PC-9 (cell line): ENCODE measurements at regions of chr15 and their contacts with region 1.

Region 1: DNA sequence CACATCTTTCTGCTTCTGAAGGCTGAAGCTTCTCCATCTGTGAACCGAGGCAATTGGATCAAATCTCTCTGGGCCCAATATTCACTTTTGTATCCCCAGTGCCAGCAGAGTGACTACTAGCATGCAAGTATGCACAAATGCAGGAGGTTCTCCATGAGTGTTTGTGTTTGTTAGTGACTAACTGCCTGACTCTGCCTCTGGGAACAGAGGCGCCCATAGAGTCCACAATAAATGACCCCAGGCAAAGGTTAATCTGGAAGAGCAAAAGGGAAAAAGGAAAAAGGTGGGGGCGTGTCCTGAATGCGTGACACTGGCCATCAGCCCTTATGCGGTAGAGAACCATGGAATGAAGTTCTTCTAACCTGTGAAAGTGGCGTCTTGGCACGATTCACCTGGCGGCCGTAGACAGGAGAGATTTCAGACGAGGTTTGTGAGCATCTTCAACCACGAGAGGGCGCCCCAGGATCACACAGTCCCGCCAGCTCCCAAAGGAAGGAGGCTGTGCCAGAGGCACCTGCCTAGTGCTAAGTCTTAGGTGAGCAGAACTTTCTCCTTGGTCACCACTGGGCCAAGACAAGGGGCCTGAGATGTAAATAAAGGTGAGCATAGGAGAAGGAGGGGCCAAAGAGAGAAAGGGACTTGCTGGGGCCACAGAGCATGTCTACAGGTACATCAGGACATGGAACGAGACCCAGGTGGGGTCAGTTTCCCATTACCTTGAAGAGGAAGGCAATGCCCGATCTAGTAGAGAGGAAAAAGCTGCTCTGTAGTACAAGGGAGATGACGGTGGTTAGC is 44.2 kb downstream of the RBPMS2 start:
- DNase-seq: peak; percentile 65 to 88
- H3K4me3 ChIP-seq: no peak overlapping the region
- H3K27ac ChIP-seq: no peak overlapping the region
- H3K4me1 ChIP-seq: no peaks in the 10 kb centered on the region
- H3K27me3 ChIP-seq: no peaks in the 10 kb centered on the region
- CTCF ChIP-seq: peak; percentile 84

Region 2: DNA sequence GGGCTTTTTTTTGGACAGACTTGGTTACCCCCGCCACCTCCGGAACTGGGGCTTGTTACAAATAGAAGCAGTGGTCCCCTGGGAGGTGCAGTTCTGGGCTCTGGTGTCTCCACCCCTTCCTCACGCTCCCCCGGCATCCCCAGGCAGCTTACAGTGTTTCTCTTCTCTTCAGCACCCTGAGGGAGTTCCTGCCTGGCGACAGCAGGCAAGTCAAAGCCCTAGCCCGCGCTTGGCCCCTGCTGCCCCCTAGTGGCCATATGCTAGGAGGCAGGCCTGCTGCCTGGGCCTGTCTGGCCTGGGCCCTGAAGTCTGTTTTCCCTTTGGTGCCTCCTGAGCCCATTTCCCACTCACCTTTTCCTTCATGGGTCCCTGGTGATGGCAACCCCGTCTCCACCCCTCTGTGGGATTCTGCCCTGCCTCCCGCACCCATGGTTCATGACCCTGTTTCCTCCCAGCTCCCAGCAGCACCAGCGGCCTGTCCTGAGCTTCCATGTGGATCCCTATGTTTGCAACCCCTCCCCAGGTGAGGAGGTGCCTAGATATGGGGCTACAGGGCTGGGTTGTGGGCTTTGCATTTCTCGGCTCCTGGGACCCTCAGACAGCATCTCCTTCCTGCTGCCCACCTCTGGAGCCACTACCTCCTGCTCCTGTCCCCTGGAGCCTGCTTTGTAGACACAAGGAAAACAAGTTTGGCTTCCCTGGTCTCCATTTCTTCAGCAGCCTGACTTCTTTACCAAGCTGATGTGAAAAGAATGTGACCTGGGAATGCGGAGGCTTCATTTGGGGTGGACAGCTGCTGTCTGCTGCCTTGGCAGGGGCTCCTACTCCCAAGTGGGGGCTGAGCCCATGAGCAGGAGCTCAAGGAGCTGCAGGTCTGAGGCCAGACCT is 577.5 kb before region 1 on chr15:
- CTCF ChIA-PET with region 1: no interaction called
- POLR2A ChIA-PET with region 1: no interaction called
- intact Hi-C with region 1: loop called (anchors 5 kb)
- DNase-seq: peak; percentile 72 to 89
- H3K4me3 ChIP-seq: no peak overlapping the region
- H3K27ac ChIP-seq: no peak overlapping the region; the same call in 1 of the 2 replicates
- H3K4me1 ChIP-seq: no peaks in the 10 kb centered on the region
- H3K27me3 ChIP-seq: no peaks in the 10 kb centered on the region
- CTCF ChIP-seq: peak; percentile 90

Region 3: DNA sequence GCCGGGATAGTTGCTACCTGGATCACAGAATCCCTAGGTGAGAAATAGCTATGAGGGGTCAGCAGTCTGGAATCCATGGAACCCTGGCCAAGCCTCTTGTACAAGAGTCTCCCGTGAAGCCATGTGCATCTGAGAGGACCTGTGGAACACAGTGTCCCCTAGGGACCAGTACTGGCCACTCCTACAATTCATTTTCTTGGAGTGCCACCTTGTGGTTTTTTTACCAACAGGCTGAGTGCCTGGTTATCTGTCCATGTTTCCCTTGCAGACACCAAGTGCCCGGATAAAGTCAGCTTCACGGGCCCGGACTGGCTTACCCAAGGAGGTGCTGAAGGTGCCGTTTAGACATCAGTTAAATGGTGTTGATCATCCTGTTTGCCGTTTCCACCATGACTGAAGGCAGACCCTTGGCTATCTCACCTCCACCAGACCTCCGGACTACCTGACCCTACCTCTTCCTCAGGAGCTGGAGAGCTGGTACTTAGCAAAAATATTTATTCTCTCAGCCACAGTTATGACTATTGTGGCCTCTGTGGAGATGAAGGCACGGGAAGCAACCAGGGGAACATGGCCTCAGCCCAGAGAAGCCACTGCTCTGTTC is 49.7 kb before region 1 on chr15:
- CTCF ChIA-PET with region 1: interaction called, 10 read pairs
- POLR2A ChIA-PET with region 1: no interaction called
- intact Hi-C with region 1: loop called (anchors 1 kb)
- DNase-seq: peak; percentile 53 to 54
- H3K4me3 ChIP-seq: no peak overlapping the region
- H3K27ac ChIP-seq: no peak overlapping the region
- H3K4me1 ChIP-seq: no peaks in the 10 kb centered on the region
- H3K27me3 ChIP-seq: no peaks in the 10 kb centered on the region
- CTCF ChIP-seq: peak; percentile 66

Region 4: DNA sequence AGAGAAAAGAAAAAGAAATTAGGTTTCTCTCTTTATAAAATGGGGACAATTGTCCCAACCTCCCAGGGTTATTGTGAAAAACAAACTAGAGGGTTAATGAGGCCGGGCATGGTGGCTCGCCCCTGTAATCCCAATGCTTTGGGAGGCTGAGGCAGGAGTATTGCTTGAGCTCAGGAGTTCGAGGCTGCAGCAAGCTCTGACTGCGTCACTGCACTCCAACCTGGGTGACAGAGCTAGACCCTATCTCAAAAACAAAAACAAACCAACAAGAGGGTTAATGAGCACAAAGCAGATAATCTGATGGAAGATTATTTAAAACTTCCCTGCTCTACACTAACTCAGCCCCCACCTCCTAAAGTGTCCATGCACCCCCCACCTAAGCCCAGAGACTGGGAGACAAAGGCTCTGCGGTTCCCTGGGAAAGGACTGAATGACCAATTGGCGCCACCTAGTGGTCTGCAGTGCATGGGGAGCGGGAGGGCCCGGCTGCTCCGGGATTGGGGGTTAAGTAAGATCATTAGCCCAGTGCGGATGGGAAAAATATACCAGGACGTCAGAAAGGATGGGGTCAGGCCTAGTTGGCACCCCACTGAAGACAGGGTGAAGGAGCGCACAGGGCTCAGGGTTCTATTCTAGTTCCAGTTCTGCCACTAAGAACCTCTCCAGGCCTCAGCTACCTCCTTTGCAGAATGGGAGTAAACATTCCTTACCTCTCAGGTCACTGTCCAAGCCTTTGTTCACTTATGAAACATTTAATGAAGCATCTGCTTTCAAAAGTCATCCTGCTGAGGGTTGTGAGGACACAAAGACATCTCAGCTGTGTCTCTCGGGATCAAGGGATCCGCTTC is 78.7 kb after region 1 on chr15:
- CTCF ChIA-PET with region 1: interaction called, 5 read pairs
- POLR2A ChIA-PET with region 1: no interaction called
- intact Hi-C with region 1: loop called (anchors 1 kb)
- DNase-seq: peak in 1 of 2 experiments; percentile 69
- H3K4me3 ChIP-seq: no peak overlapping the region
- H3K27ac ChIP-seq: no peak overlapping the region
- H3K4me1 ChIP-seq: no peaks in the 10 kb centered on the region
- H3K27me3 ChIP-seq: no peaks in the 10 kb centered on the region
- CTCF ChIP-seq: peak; percentile 93

Region 5: DNA sequence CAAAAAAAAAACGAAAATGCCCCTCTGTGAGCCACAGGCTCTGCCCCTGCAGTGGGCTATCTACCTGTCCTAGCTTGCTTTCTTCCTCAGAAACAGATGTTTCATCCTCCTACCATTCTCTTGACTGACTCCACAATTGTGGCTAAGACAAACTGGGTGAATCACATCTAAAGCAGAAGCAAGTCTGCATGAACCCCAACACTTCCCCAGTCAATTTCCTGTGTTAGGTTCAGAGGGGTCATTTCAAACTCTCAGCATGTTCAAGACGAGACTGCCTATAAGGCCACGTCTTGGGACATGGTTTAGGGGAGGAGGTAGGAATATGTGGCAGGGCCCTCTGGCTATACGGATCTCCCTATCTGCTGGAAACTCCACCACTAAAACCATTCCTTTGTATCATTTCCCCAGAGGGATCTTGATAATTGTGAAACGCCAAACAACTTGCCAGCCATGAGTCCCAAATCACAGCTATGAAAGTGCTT is 151.9 kb after region 1 on chr15:
- CTCF ChIA-PET with region 1: no interaction called
- POLR2A ChIA-PET with region 1: no interaction called
- intact Hi-C with region 1: no loop called
- DNase-seq: no peak
- H3K4me3 ChIP-seq: no peak overlapping the region
- H3K27ac ChIP-seq: no peak overlapping the region; the same call in 1 of the 2 replicates
- H3K4me1 ChIP-seq: peaks cover 12% of the 10 kb centered on the region
- H3K27me3 ChIP-seq: no peaks in the 10 kb centered on the region
- CTCF ChIP-seq: no peak

Region 6: GRCh38 chr15:65101411-65101890 is 370.2 kb after region 1 on chr15:
- CTCF ChIA-PET with region 1: interaction called, 4 read pairs
- POLR2A ChIA-PET with region 1: no interaction called
- intact Hi-C with region 1: loop called (anchors 5 kb)
- DNase-seq: peak in 1 of 2 experiments; percentile 49
- H3K4me3 ChIP-seq: no peak overlapping the region
- H3K27ac ChIP-seq: no peak overlapping the region
- H3K4me1 ChIP-seq: no peaks in the 10 kb centered on the region
- H3K27me3 ChIP-seq: no peaks in the 10 kb centered on the region
- CTCF ChIP-seq: peak; percentile 77

Region 7: DNA sequence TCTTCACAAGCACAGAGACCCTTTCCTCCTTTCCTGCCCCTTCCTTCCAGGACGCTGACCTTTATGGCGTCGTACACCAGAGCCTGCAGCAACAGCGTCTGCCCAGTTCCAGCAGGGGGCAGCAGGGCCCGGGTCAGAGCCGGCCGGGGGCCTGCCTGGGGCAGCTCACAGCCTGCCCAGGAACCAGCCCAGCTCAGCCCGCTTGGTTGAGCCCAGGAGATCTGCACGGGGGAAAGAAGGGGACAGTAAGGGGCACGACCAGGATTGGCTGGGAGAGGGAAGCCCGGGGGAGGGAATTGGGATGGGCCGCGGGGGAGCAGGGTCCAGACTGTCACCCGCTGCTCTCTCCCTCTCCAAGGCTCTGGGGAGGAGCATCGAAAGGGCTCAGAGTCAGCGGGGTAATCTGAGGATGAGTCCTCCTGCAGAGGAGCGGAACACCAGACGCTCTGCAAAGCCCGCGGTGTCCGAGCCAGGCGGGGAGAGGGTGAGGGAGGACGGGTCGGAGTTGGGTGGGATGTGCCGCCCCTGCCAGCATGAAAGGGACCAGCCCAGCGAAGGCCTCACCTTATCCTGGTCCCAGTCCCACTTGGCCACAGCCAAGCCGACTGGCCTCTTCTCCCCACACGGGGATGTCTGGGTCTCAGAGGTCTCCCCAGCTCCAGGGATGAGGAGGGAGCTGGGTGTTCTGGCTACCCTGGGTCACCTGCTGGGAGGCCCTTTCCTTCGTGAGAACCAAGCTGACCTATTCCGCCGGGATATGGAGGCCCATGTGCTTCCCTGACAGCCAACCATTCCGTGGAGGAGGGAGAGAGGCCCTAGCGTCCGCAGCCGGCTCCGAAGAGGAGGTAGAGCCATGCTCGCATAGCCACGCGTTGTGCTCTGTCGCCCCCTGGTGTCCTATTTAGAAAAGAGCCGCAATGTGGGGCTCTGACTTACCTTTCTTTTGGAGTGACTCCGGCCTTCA is 654.0 kb after region 1 on chr15:
- CTCF ChIA-PET with region 1: no interaction called
- POLR2A ChIA-PET with region 1: no interaction called
- intact Hi-C with region 1: loop called (anchors 5 kb)
- DNase-seq: peak; percentile 57 to 85
- H3K4me3 ChIP-seq: peak overlapping the region; percentile 46
- H3K27ac ChIP-seq: no peak overlapping the region
- H3K4me1 ChIP-seq: peaks cover 4% of the 10 kb centered on the region; the same call in 1 of the 2 replicates
- H3K27me3 ChIP-seq: peaks cover 18% of the 10 kb centered on the region
- CTCF ChIP-seq: peak; percentile 80